Activated CD4-positive, alpha-beta T cell treated with anti-CD3 and anti-CD28 coated beads for 36 hours (primary cell): ENCODE measurements at regions of chr4 and their contacts with region 1.

Region 1: DNA sequence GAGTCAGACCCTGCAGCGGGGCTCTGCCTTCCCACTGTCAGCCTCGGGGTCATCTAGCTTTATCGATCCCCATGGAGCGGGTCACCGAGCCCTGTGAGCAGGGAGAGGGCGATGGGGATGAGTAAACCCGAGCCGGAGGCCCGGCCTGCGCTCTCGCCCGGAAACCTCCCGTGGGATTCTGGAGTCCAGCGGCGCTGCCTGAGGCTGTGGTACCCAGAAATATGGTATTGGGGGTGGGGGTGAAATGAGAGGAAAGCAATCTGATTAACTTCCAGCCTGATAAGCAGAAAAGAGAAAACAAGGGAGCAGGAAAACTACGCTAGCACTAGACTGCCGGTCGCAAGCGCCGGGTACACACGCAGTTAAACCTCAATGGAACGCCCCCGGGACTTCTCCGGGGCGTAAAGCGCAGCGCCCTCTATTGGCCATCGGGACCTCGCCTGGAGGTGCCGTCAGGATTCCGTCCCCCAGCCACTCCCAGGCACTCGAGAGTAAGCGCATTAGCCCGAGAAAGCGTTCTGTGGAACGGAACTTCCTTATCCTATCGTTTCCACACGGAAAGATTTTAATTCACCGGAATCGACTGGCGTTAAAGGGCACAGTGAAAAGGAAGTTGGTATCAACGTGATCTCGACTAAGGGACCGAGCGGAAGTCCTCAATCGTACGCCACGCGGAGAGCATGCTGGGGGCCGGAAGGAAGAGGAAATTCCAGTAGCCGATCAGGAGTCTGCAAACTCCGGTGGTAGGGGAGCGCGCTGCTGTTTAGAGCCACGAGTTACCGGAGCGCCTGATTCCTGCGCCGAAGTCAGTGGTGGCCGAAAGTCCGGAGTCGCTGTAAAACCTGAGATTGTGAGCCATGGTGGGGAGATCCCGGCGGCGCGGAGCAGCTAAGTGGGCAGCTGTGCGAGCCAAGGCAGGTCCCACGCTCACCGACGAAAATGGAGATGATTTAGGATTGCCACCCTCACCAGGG is at the start of gene UTP3:
- DNase-seq: peak; percentile 97
- ATAC-seq: peak; percentile 92
- H3K4me3 Mint-ChIP-seq: peak within 1 kb of the TSS; percentile 96
- H3K27ac Mint-ChIP-seq: peak within 1 kb of the TSS; percentile 99
- H3K4me1 Mint-ChIP-seq: peaks cover 31% of the 10 kb centered on the region
- H3K27me3 Mint-ChIP-seq: no peaks in the 10 kb centered on the region
- total RNA-seq, gene UTP3: 32.6 to 34.3 TPM

Region 2: GRCh38 chr4:70601422-70602039 is 86.6 kb before region 1 on chr4:
- CTCF ChIA-PET with region 1: no interaction called
- POLR2A ChIA-PET with region 1: no interaction called
- intact Hi-C with region 1: loop called (anchors 1 to 2 kb)
- DNase-seq: peak; percentile 79
- ATAC-seq: peak; percentile 92
- H3K4me3 Mint-ChIP-seq: no peak overlapping the region
- H3K27ac Mint-ChIP-seq: no peak overlapping the region
- H3K4me1 Mint-ChIP-seq: no peaks in the 10 kb centered on the region
- H3K27me3 Mint-ChIP-seq: peaks cover 2% of the 10 kb centered on the region

Region 3: GRCh38 chr4:70651864-70652506 is 36.1 kb before region 1 on chr4:
- CTCF ChIA-PET with region 1: no interaction called
- POLR2A ChIA-PET with region 1: no interaction called
- intact Hi-C with region 1: loop called in 1 of 2 experiments (anchors 2 kb)
- DNase-seq: no peak
- ATAC-seq: peak; percentile 39
- H3K4me3 Mint-ChIP-seq: no peak overlapping the region
- H3K27ac Mint-ChIP-seq: no peak overlapping the region
- H3K4me1 Mint-ChIP-seq: no peaks in the 10 kb centered on the region
- H3K27me3 Mint-ChIP-seq: peaks cover 3% of the 10 kb centered on the region

Region 4: DNA sequence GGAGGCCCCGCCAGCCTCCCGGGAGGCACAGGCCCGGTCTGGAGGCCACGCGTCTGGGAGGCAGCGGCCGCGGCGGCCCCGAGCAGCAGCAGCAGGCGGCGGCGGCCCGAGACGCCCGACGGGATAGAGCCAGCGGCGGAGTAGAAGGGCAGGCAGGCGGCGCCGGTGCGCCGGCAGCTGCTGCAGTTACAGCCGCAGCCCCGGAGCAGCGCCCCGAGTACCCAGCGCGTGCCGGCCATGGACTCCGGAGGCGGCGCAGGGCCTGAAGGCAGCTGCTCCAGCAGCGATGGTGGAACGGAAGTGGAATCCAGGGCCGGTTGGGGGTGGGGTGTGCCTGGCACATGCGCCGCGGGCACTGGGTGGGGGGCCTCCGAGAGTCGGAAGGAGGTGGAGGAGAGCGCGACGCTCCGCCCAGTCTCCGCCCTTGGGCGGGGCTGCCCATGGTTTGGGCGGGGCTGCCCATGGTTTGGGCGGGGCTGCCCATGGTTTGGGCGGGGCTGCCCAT is 151.5 kb after region 1 on chr4 and contains the start of gene GRSF1:
- CTCF ChIA-PET with region 1: interaction called, 6 read pairs
- POLR2A ChIA-PET with region 1: no interaction called
- intact Hi-C with region 1: loop called (anchors 1 kb)
- DNase-seq: peak; percentile 98
- ATAC-seq: peak; percentile 87
- H3K4me3 Mint-ChIP-seq: peak within 1 kb of the TSS; percentile 94
- H3K27ac Mint-ChIP-seq: peak within 1 kb of the TSS; percentile 95
- H3K4me1 Mint-ChIP-seq: peaks cover 53% of the 10 kb centered on the region
- H3K27me3 Mint-ChIP-seq: no peaks in the 10 kb centered on the region
- total RNA-seq, gene GRSF1: 96.8 to 115 TPM

Region 5: GRCh38 chr4:70993181-70994068 is 305.3 kb after region 1 on chr4 and contains the start of gene DCK:
- CTCF ChIA-PET with region 1: no interaction called
- POLR2A ChIA-PET with region 1: no interaction called
- intact Hi-C with region 1: loop called (anchors 1 kb)
- DNase-seq: peak; percentile 91
- ATAC-seq: peak; percentile 86
- H3K4me3 Mint-ChIP-seq: peak within 1 kb of the TSS; percentile 96
- H3K27ac Mint-ChIP-seq: peak within 1 kb of the TSS; percentile 92
- H3K4me1 Mint-ChIP-seq: peaks cover 39% of the 10 kb centered on the region
- H3K27me3 Mint-ChIP-seq: no peaks in the 10 kb centered on the region
- total RNA-seq, gene DCK: 29.2 to 34.4 TPM

Region 6: GRCh38 chr4:71814433-71814832 is 1126.3 kb after region 1 on chr4:
- CTCF ChIA-PET with region 1: no interaction called
- POLR2A ChIA-PET with region 1: no interaction called
- intact Hi-C with region 1: no loop called
- DNase-seq: no peak
- ATAC-seq: no peak
- H3K4me3 Mint-ChIP-seq: no peak overlapping the region
- H3K27ac Mint-ChIP-seq: no peak overlapping the region
- H3K4me1 Mint-ChIP-seq: no peaks in the 10 kb centered on the region
- H3K27me3 Mint-ChIP-seq: peaks cover 2% of the 10 kb centered on the region